Dendritic cell treated with granulocyte-macrophage colony-stimulating factor and Interleukin-4, amounts not matched to agents 40 ng/mL and 50 ng/mL, for 4 days (primary cell): ENCODE measurements at regions of chr3 and their contacts with region 1.

Region 1: DNA sequence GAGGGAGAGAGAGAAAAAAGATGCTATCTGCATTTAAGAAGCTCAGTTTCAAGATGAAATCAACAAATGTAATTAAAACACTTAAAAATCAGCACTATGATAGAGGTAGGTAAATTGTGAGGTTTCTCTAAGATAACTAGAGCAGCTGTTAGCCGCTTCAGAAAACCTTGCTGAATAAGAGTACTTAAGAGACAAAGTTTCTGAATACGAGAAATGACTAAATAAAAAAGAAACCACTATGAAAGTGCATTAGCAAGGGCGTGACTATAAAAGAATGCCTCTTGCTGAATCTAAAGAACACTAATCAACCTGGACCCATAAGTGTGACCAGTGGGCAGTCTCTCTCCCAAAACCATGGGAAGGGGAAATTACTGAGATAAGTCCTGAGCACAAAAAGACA is 41.8 kb downstream of the IQCB1 start:
- H3K4me3 Mint-ChIP-seq: no peak overlapping the region
- H3K27ac Mint-ChIP-seq: no peak overlapping the region
- H3K4me1 Mint-ChIP-seq: no peaks in the 10 kb centered on the region
- H3K27me3 Mint-ChIP-seq: no peaks in the 10 kb centered on the region

Region 2: GRCh38 chr3:121809249-121809648 is 16.2 kb after region 1 on chr3:
- intact Hi-C with region 1: loop called (anchors 1 kb)
- H3K4me3 Mint-ChIP-seq: no peak overlapping the region
- H3K27ac Mint-ChIP-seq: no peak overlapping the region
- H3K4me1 Mint-ChIP-seq: peaks cover 16% of the 10 kb centered on the region
- H3K27me3 Mint-ChIP-seq: no peaks in the 10 kb centered on the region